Activated CD4-positive, alpha-beta memory T cell treated with anti-CD3 and anti-CD28 coated beads for 36 hours (primary cell): ENCODE measurements at regions of chr2 and their contacts with region 1.

Region 1: GRCh38 chr2:101252408-101253012 is at the start of gene CNOT11:
- DNase-seq: peak; percentile 99
- H3K4me3 Mint-ChIP-seq: peak within 1 kb of the TSS; percentile 95
- H3K27ac Mint-ChIP-seq: peak within 1 kb of the TSS; percentile 91
- H3K4me1 Mint-ChIP-seq: peaks cover 39% of the 10 kb centered on the region
- H3K27me3 Mint-ChIP-seq: no peaks in the 10 kb centered on the region
- total RNA-seq, gene CNOT11: 54.6 to 56.2 TPM

Region 2: DNA sequence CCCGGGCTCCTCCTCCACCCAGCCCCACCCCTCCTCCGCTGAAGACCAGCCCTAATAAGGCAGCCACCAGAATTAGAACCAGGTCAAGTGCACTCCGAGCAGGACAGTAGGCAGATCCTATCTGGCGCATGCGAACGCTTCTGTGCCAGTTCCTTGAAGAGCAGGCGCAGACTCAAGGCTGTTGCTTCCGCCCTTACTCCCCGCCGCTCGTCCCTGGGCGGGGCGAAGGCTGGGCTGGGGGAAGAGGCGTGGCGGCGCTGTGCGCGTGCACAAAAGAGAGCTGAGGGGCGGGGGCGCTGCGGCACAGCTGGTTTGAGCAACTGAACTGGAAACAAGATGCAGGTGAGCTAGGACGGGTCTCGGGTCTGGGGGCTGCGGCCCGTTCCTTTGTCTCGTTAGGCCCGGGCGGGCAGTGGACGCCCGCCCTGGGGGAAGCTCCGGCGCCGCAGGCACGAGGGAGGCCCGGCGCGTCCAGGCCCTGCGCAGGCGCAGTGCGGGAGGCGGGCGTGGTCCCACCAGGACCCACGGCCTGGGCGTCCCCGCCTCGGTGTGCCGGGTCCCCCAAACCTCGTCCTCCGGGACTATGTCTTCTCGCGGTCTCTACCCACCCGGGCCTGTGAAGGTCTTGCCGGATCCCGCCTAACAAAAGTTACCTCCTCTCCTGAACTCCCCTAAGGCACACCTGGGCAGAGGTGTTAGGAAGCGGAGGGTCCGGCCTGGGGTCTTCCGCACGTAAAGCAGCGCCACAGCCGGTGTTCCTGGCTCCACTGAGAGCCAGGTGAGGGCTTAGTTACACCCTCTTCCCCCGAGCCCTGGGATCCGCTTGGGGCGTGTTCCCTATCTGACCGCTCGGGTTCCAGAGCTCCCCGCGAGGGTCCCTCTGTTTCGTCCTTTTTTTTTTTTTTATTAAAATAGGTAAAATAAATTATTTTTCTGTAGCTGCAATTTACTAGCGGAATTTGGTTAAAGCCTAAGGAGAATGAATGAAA is 689.5 kb before region 1 on chr2 and contains the start of gene PDCL3:
- CTCF ChIA-PET with region 1: no interaction called
- POLR2A ChIA-PET with region 1: no interaction called
- intact Hi-C with region 1: loop called (anchors 2 kb)
- DNase-seq: peak; percentile 95
- H3K4me3 Mint-ChIP-seq: peak within 1 kb of the TSS; percentile 88
- H3K27ac Mint-ChIP-seq: peak within 1 kb of the TSS; percentile 98
- H3K4me1 Mint-ChIP-seq: peaks cover 32% of the 10 kb centered on the region
- H3K27me3 Mint-ChIP-seq: no peaks in the 10 kb centered on the region
- total RNA-seq, gene PDCL3: 45.9 to 47.7 TPM

Region 3: DNA sequence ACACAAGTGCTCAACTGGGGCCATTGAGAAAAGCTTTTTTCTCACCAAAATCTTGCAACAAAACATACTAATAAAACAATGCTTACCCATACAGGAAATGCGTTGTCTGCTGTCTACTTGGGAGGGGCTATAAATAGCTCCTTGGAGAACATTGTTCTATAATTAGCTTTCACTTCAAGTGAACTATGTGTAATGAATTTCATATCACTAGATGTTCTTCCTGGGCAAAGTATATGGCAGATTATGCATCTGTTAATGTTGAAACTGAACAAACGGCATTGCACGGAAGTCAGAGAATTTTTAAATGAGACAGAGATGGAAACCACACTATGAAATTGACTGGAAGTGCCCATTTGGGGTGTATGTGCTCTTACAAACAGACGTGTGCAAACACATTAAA is 439.0 kb before region 1 on chr2:
- CTCF ChIA-PET with region 1: no interaction called
- POLR2A ChIA-PET with region 1: no interaction called
- intact Hi-C with region 1: no loop called
- DNase-seq: no peak
- H3K4me3 Mint-ChIP-seq: no peak overlapping the region
- H3K27ac Mint-ChIP-seq: no peak overlapping the region
- H3K4me1 Mint-ChIP-seq: peaks cover 18% of the 10 kb centered on the region
- H3K27me3 Mint-ChIP-seq: peaks cover 18% of the 10 kb centered on the region

Region 4: DNA sequence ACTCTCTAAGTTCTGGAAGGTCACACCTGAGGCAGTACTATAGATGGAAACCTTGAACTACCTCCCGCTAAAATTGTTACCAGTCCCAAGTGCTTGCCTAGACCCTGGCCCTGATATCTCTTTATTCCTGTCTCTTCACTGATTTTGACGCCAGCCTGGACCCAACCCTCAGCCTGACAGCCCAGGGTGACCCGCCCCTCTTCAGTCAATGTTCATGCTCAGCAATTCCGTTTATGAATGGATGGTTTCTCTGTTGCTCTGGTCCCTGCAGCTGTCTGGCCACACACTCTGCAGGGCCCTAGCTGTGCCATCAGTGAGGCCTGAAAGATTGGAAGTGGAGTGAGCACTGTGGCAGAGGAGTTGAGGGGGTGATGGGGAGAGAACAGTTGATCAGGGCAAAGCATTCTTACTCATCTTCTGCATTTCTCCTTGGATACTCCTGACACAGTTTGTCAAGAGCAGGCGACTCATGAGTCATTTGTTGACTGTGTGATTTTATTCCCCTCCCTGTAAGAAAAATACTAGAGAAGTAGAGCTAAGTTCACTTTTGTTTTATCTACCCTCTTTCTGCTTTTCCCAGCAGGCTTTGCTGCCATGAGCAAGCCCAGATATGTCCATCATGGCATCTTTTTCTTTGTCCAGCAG is 386.6 kb before region 1 on chr2:
- CTCF ChIA-PET with region 1: no interaction called
- POLR2A ChIA-PET with region 1: no interaction called
- intact Hi-C with region 1: no loop called
- DNase-seq: no peak
- H3K4me3 Mint-ChIP-seq: no peak overlapping the region
- H3K27ac Mint-ChIP-seq: no peak overlapping the region
- H3K4me1 Mint-ChIP-seq: no peaks in the 10 kb centered on the region
- H3K27me3 Mint-ChIP-seq: peaks cover 2% of the 10 kb centered on the region

Region 5: GRCh38 chr2:101001691-101002561 is 250.6 kb before region 1 on chr2 and contains the start of gene RPL31:
- CTCF ChIA-PET with region 1: interaction called, 6 read pairs
- POLR2A ChIA-PET with region 1: no interaction called
- intact Hi-C with region 1: loop called (anchors 2 kb)
- DNase-seq: peak; percentile 98
- H3K4me3 Mint-ChIP-seq: peak within 1 kb of the TSS; percentile 90
- H3K27ac Mint-ChIP-seq: peak within 1 kb of the TSS; percentile 87
- H3K4me1 Mint-ChIP-seq: peaks cover 40% of the 10 kb centered on the region
- H3K27me3 Mint-ChIP-seq: no peaks in the 10 kb centered on the region
- total RNA-seq, gene RPL31: 1,809 to 1,825 TPM

Region 6: DNA sequence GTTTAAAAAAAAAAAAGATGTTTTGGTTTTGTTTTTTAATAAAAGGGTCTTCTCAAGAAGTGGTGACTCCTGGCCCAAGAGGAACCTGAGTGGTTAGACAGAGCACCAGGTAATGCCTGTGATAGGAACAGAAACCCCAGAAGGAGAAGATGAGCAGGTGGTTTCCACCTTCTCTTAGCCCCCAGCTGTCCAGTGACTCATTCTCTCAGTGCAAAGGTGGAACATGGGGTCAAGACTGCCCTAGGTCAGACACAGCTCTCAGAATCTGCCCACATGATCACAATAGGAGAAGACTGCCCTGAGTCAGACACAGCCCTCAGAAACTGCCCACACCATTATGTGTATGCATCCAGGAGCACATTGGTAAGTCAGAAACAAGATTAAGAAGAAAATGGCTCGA is 163.1 kb before region 1 on chr2:
- CTCF ChIA-PET with region 1: no interaction called
- POLR2A ChIA-PET with region 1: no interaction called
- intact Hi-C with region 1: no loop called
- DNase-seq: peak; percentile 12
- H3K4me3 Mint-ChIP-seq: no peak overlapping the region
- H3K27ac Mint-ChIP-seq: no peak overlapping the region
- H3K4me1 Mint-ChIP-seq: peaks cover 9% of the 10 kb centered on the region
- H3K27me3 Mint-ChIP-seq: no peaks in the 10 kb centered on the region

Region 7: DNA sequence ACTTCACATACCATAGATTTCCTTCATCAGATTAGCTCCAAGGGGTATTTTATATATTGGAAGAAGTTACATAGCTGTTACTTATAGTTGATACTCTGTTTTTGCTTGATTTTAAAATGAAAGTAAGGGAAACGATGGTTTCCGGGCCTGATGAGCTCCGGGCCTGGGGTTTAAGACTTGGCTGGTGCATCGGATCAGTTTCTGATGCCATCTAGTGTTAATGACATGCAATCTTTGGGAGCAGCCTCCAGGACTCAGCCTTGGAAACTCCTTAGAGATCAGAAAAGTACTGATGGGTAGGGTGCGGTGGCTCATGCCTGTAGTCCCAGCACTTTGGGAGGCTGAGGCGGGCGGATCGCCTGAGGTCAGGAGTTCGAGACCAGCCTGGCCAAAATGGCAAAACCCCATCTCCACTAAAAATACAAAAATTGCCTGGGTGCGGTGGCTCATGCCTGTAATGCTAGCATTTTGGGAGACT is 47.0 kb before region 1 on chr2:
- CTCF ChIA-PET with region 1: interaction called, 10 read pairs
- POLR2A ChIA-PET with region 1: no interaction called
- intact Hi-C with region 1: no loop called
- DNase-seq: peak; percentile 64
- H3K4me3 Mint-ChIP-seq: peak overlapping the region; percentile 20
- H3K27ac Mint-ChIP-seq: no peak overlapping the region
- H3K4me1 Mint-ChIP-seq: peaks cover 2% of the 10 kb centered on the region
- H3K27me3 Mint-ChIP-seq: no peaks in the 10 kb centered on the region

Region 8: DNA sequence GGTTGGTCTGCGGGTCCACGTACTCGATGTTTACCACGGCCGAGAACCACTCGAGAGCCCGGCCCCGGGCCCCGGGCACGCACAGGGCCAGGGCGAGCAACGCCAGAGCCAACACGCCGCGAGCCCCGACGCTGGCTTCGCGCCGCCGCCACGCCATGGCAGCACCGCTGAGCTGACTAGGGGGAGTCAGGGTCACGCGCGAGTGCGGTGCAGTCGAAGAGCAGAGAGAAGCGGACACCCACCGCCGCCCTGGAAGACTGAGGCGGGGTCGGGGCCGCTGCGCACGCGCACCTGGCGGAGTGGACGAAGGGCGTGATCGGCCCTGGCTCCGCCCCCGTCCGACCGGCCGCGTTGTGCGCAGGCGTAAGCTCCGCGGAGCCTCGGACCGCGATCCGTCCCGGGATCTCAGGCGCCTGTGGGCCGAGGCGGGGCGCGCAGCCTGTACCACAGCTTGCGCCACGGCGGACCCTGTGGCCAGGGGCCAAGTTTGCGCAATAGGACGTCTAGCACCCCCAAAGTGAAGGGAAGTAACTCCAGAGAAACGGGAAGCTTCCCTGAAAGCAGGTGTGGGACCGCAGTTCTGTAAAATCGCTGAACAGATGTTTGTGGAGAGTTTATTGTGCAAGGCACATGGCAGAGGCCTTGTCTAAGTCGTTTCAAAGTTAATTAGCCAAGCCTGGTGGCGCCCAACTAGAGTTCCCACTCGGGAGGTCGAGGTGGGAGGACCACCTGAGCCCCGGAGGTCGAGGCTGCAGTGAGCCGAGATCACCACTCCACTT is 56.1 kb after region 1 on chr2 and contains the start of gene RNF149:
- CTCF ChIA-PET with region 1: no interaction called
- POLR2A ChIA-PET with region 1: interaction called, 10 read pairs
- intact Hi-C with region 1: loop called (anchors 1 kb)
- DNase-seq: peak; percentile 92
- H3K4me3 Mint-ChIP-seq: peak within 1 kb of the TSS; percentile 98
- H3K27ac Mint-ChIP-seq: peak within 1 kb of the TSS; percentile 97
- H3K4me1 Mint-ChIP-seq: peaks cover 65% of the 10 kb centered on the region
- H3K27me3 Mint-ChIP-seq: no peaks in the 10 kb centered on the region
- total RNA-seq, gene RNF149: 42.1 to 46.9 TPM

Region 9: GRCh38 chr2:101387151-101387807 is 134.8 kb after region 1 on chr2 and contains the start of gene CREG2:
- CTCF ChIA-PET with region 1: interaction called, 3 read pairs
- POLR2A ChIA-PET with region 1: no interaction called
- intact Hi-C with region 1: loop called (anchors 10 kb)
- DNase-seq: peak; percentile 70
- H3K4me3 Mint-ChIP-seq: peak within 1 kb of the TSS; percentile 52
- H3K27ac Mint-ChIP-seq: no peak within 1 kb of the TSS
- H3K4me1 Mint-ChIP-seq: peaks cover 11% of the 10 kb centered on the region
- H3K27me3 Mint-ChIP-seq: peaks cover 32% of the 10 kb centered on the region
- total RNA-seq, gene CREG2: not detected